Heart right ventricle (tissue), 16 donors: ENCODE measurements at regions of chr6 and their contacts with region 1.

Region 1: DNA sequence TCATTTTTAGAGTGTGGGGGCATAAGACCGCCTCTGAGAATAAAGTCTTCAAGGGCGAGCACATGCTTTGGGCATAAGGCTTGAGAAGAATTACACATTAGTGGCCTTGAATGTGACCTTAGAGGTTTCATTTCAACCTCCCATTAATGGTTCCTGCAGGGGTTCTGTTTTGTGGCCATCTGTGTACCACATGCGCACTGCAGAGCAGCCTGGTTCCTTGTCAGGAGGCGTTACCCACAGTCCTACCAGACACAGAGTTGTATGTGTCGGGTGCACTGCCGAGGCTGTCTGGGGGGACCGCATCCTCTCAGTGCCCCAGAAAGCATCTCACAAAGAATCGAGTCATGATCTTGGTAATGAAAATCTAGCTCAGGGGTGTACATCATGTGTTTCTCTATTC is 115.7 kb downstream of the B3GAT2 start:
- DNase-seq: no peak
- ATAC-seq: no peak
- H3K4me3 ChIP-seq: no peak overlapping the region
- H3K27ac ChIP-seq: no peak overlapping the region
- H3K4me1 ChIP-seq: peaks cover 0 to 11% (median 0%) of the 10 kb centered on the region in 9 donors
- H3K27me3 ChIP-seq: no peaks in the 10 kb centered on the region
- CTCF ChIP-seq: no peak

Region 2: GRCh38 chr6:70872469-70872868 is 31.4 kb after region 1 on chr6:
- intact Hi-C with region 1: loop called in 1 of 10 experiments (anchors 1 kb)
- DNase-seq: no peak
- ATAC-seq: no peak
- H3K4me3 ChIP-seq: no peak overlapping the region
- H3K27ac ChIP-seq: no peak overlapping the region
- H3K4me1 ChIP-seq: no peaks in the 10 kb centered on the region
- H3K27me3 ChIP-seq: no peaks in the 10 kb centered on the region
- CTCF ChIP-seq: no peak